Esophagus muscularis mucosa (tissue), 4 donors: ENCODE measurements at regions of chr7 and their contacts with region 1.

Region 1: DNA sequence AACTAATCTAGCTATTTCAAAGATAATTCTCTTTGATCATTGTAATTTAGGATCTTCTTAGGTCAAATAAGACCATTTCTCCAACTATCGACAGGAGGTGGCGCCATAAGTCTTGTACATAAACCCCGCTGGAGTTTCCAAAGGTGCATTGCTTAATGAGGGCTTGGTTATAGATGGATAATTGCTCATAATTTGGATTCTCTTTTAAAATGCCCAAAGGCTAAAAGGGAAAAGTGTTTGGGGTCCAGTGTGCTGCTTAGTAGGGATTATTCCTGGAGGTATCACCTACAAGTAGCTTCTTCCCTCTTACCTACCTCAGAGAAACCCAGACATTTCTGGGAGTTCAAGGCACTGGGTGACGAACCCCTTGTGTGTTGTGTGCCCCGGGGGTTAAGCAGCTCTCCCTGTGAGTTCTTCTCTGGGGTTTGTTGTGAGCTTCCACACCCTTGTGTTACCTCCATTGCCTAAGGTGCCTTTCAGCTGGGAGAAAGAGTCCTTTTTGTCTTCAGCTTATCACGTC is 75.2 kb downstream of the PAXIP1 start:
- DNase-seq: no peak
- H3K4me3 ChIP-seq: peak overlapping the region; percentile 57 to 68 (median 67)
- H3K27ac ChIP-seq: peak overlapping the region; percentile 86 to 91 (median 88)
- H3K4me1 ChIP-seq: peaks cover 6 to 20% (median 17%) of the 10 kb centered on the region in 4 donors
- H3K27me3 ChIP-seq: no peaks in the 10 kb centered on the region
- CTCF ChIP-seq: peak; percentile 61 to 75 (median 63)
- EP300 ChIP-seq: no peak
- POLR2A ChIP-seq: no peak

Region 2: GRCh38 chr7:155003376-155004214 is 75.9 kb after region 1 on chr7:
- intact Hi-C with region 1: loop called (anchors 2 kb)
- DNase-seq: no peak
- H3K4me3 ChIP-seq: peak overlapping the region; percentile 62 to 96 (median 78)
- H3K27ac ChIP-seq: peak overlapping the region; percentile 74 to 89 (median 86)
- H3K4me1 ChIP-seq: peaks cover 14 to 42% (median 23%) of the 10 kb centered on the region in 4 donors
- H3K27me3 ChIP-seq: no peaks in the 10 kb centered on the region
- CTCF ChIP-seq: no peak
- EP300 ChIP-seq: no peak
- POLR2A ChIP-seq: peak; percentile 50

Region 3: GRCh38 chr7:155298834-155299534 is 371.3 kb after region 1 on chr7:
- intact Hi-C with region 1: loop called (anchors 5 kb)
- DNase-seq: peak; percentile 99
- H3K4me3 ChIP-seq: peak overlapping the region; percentile 76 to 98 (median 87)
- H3K27ac ChIP-seq: peak overlapping the region; percentile 89 to 98 (median 94)
- H3K4me1 ChIP-seq: peaks cover 25 to 33% (median 30%) of the 10 kb centered on the region in 4 donors
- H3K27me3 ChIP-seq: peaks cover 0 to 6% (median 0%) of the 10 kb centered on the region in 4 donors
- CTCF ChIP-seq: peak in 1 of 3 experiments; percentile 3
- EP300 ChIP-seq: no peak
- POLR2A ChIP-seq: no peak

Region 4: DNA sequence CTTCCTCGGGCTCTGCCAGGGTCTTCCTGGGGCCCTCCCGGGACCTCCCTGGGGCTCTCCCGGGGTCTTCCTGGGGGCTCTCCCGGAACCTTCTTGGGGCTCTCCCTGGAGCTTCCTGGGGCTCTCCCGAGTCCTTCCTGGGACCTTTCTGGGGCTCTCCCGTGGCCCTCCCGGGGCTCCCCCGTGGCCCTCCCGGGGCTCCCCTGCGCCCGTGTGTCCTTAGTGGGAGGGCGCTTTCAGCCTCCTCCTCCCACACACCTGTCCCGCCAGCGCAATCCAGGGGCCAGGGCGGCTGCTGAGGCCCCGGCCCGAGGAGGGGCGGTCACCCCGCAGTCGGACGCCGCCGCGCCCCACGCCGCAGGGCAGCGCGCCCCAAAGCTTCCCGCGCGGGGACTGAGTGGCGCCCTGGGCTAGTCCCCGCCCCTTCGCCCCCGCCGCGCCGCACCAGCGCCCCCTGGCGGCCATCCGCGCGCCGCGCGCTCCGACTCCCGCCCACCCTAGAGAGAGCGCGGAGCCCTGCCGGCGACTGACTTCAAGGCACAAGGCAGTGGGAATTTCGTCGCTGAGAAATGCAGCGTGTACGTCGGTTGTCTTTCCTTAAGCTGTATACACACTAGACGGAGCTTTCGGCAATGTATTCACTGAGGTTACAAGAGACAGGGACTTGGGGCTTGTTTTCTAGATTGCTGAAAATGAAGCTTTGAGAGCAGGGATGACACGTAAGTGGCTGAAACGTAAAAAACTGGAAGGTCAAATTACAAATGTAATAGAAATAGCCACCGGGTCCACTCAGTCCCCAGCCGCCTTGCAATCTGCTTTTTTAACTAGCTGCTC is 417.1 kb after region 1 on chr7:
- intact Hi-C with region 1: loop called (anchors 2 kb)
- DNase-seq: no peak
- H3K4me3 ChIP-seq: peak overlapping the region; percentile 43 to 61 (median 50)
- H3K27ac ChIP-seq: no peak overlapping the region
- H3K4me1 ChIP-seq: peaks cover 4 to 15% (median 12%) of the 10 kb centered on the region in 4 donors
- H3K27me3 ChIP-seq: peaks cover 0 to 50% (median 0%) of the 10 kb centered on the region in 4 donors
- CTCF ChIP-seq: peak in 2 of 3 experiments; percentile 89 to 98
- EP300 ChIP-seq: no peak
- POLR2A ChIP-seq: no peak

Region 5: GRCh38 chr7:155763691-155764437 is 836.2 kb after region 1 on chr7:
- intact Hi-C with region 1: loop called (anchors 10 kb)
- DNase-seq: no peak
- H3K4me3 ChIP-seq: no peak overlapping the region
- H3K27ac ChIP-seq: peak overlapping the region in 2 of 4 donors; percentile 14 to 19
- H3K4me1 ChIP-seq: peaks cover 21 to 33% (median 27%) of the 10 kb centered on the region in 4 donors
- H3K27me3 ChIP-seq: no peaks in the 10 kb centered on the region
- CTCF ChIP-seq: no peak
- EP300 ChIP-seq: no peak
- POLR2A ChIP-seq: no peak